ENCODE measurements at regions of chr1 and their contacts with region 1.

Region 1: DNA sequence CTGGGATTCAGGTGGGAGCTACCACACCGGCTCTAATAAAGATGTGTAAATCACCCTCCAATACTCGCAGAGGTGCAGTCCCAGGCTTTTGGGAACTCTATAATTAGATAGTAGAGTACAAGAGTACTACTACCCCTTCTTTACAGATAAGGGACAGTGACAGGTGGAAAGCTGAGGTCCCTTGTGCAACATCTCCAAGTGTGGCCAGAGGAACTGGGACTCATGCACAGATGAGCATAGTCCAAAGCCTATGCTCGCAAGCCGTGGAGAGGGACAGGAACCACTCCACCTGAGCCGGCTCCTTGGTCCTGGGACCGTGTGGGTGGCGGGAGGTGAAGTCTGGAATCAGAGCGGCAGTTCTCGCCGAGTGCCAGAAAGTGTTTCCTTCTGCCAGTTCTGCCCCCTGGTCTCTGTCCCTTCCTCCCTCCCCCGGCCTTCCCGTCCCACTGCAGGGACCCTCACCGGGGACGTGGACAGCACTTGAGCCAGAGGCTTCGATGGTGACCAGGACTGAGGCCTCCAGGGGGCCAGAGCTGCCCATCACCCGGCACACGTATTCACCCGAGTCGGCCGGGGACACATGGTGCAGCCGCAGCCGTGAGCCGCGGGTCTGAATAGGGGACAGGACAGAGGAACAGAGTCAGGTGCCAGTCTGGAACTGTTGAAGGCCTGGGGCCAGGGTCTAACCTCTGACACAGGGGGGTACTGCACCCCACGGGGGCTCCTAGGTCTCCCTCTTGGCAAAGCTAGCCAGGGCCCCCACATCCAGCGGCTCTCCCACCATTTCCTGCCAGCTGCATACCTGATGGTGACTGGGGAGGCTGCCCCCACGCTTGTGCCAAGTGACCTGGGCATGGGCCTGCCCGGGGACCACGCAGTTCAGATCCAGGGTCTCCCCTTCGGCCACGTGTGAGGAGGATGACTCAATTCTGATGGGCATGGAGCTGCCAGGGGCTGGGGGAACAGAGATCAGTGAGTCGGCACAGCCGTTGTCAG is 33.9 kb downstream of the LDLRAD2 start:
- DNase-seq: no peak
- H3K4me3 ChIP-seq: no peak overlapping the region
- H3K27ac ChIP-seq: no peak overlapping the region
- H3K4me1 ChIP-seq: peaks cover 3% of the 10 kb centered on the region
- H3K27me3 ChIP-seq: no peaks in the 10 kb centered on the region
- CTCF ChIP-seq: no peak

Region 2: DNA sequence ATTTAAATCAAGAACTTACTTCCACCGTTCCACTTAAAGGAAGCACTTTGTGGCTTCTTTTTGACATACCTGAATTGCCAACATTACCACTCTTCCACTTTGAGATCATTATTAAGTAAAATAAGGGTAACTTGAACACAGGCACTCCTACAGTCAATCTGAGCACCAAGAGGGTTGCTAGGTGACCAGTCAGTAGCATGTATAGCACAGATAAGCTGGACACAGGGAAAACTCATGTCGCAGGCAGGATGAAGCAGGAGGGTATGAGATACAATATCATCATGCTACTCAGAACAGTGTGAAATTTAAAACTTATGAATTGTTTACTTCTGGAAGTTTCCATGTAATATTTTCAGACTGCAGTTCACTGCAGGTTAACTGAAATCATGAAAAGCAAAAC is 129.8 kb before region 1 on chr1:
- CTCF ChIA-PET with region 1: no interaction called
- dilution Hi-C with region 1: loop called (anchors 10 kb)
- in situ Hi-C with region 1: no loop called
- intact Hi-C with region 1: no loop called
- DNase-seq: no peak
- H3K4me3 ChIP-seq: no peak overlapping the region
- H3K27ac ChIP-seq: no peak overlapping the region
- H3K4me1 ChIP-seq: peaks cover 5% of the 10 kb centered on the region
- H3K27me3 ChIP-seq: no peaks in the 10 kb centered on the region
- CTCF ChIP-seq: no peak

Region 3: GRCh38 chr1:21882669-21883415 is 36.9 kb after region 1 on chr1:
- CTCF ChIA-PET with region 1: no interaction called
- dilution Hi-C with region 1: loop called (anchors 5 kb)
- in situ Hi-C with region 1: no loop called
- intact Hi-C with region 1: no loop called
- DNase-seq: no peak
- H3K4me3 ChIP-seq: no peak overlapping the region
- H3K27ac ChIP-seq: no peak overlapping the region
- H3K4me1 ChIP-seq: no peaks in the 10 kb centered on the region
- H3K27me3 ChIP-seq: no peaks in the 10 kb centered on the region
- CTCF ChIP-seq: no peak

Region 4: DNA sequence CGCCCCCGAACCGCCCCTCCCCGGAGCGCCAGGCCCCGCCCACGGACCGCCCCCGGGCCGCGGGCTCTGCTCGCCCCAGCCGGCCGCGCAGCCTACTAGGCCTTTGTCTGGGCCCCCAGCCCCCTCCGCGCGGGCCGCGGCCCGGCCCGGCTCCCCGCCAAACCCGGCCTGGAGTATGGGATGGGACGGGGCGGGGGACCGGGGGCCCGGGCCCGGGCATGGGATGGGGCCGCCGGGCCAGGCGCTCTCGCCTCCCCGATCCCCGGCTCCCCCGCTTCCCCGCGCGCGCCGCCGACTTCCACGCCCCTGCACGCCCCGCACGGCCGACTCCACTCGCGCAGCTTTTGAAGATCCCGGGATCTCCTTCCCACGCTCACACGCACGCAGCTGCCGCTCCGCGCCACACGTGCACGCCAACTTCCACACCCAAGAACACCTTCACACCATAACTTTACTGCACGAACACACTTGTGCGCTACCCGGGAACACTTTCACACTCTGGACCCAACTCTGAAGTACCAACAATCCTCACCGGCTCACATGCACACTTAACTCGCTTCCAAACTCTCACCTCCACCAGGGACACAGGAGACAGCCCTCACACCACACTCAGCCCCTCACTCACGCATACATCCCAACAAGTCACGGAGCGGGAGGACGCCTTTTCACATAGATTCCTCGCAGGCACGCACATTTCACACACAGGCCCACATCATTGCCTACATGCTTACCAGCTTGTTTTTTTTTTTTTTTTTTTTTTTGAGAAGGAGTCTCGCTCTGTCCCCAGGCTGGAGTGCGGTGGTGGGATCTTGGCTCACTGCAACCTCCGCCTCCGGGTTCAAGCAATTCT is 91.7 kb after region 1 on chr1:
- CTCF ChIA-PET with region 1: no interaction called
- dilution Hi-C with region 1: loop called (anchors 5 kb)
- in situ Hi-C with region 1: no loop called
- intact Hi-C with region 1: no loop called
- DNase-seq: peak; percentile 79
- H3K4me3 ChIP-seq: peak overlapping the region; percentile 15 to 33 (median 18)
- H3K27ac ChIP-seq: peak overlapping the region; percentile 41
- H3K4me1 ChIP-seq: peaks cover 56% of the 10 kb centered on the region
- H3K27me3 ChIP-seq: no peaks in the 10 kb centered on the region
- CTCF ChIP-seq: no peak